GM10248 (cell line): ENCODE measurements at regions of chr14 and their contacts with region 1.

Region 1: GRCh38 chr14:63276492-63277342 is 42.0 kb downstream of the GPHB5 start:
- DNase-seq: peak; percentile 54
- CTCF ChIP-seq: peak; percentile 73

Region 2: GRCh38 chr14:62162998-62163589 is 1113.6 kb before region 1 on chr14:
- CTCF ChIA-PET with region 1: interaction called, 23 read pairs
- POLR2A ChIA-PET with region 1: no interaction called
- DNase-seq: peak; percentile 39
- CTCF ChIP-seq: peak; percentile 67

Region 3: GRCh38 chr14:62179367-62180018 is 1097.2 kb before region 1 on chr14:
- CTCF ChIA-PET with region 1: interaction called, 23 read pairs
- POLR2A ChIA-PET with region 1: no interaction called
- DNase-seq: peak; percentile 31
- CTCF ChIP-seq: peak; percentile 71

Region 4: GRCh38 chr14:63295231-63295685 is 18.5 kb after region 1 on chr14:
- CTCF ChIA-PET with region 1: interaction called, 13 read pairs
- POLR2A ChIA-PET with region 1: no interaction called
- DNase-seq: no peak
- CTCF ChIP-seq: no peak